ENCODE measurements at regions of chr17 and their contacts with region 1.

Region 1: GRCh38 chr17:66460558-66460957 is 158.1 kb downstream of the PRKCA start:
- DNase-seq: no peak
- ATAC-seq: no peak
- H3K4me3 ChIP-seq: no peak overlapping the region
- H3K27ac ChIP-seq: peak overlapping the region; percentile 81
- H3K4me1 ChIP-seq: peaks cover 39% of the 10 kb centered on the region
- H3K27me3 ChIP-seq: no peaks in the 10 kb centered on the region
- CTCF ChIP-seq: no peak

Region 2: GRCh38 chr17:65826285-65826976 is 634.1 kb before region 1 on chr17:
- CTCF ChIA-PET with region 1: no interaction called
- POLR2A ChIA-PET with region 1: no interaction called
- in situ Hi-C with region 1: no loop called
- intact Hi-C with region 1: no loop called
- DNase-seq: no peak
- ATAC-seq: no peak
- H3K4me3 ChIP-seq: no peak overlapping the region
- H3K27ac ChIP-seq: no peak overlapping the region
- H3K4me1 ChIP-seq: no peaks in the 10 kb centered on the region
- H3K27me3 ChIP-seq: no peaks in the 10 kb centered on the region
- CTCF ChIP-seq: no peak

Region 3: DNA sequence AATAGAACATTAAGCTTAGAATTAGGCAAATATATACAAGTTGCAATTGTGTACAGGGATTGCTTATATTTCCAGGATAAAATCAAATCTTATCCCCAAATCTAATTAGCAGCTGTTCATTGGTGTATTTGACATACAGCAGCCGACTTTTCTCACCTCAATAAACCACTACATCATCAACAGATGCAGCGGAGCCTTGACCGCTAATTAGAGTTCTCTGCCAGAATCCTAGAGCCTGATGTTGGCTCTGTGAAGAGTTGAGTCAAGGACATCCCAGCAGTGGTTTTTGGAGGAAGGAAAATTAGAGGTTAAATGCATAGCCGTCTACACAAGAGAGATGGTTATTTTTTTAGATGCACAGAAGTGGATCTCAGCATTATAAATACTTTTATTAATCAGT is 152.4 kb after region 1 on chr17:
- CTCF ChIA-PET with region 1: no interaction called
- POLR2A ChIA-PET with region 1: interaction called, 11 read pairs
- in situ Hi-C with region 1: no loop called
- intact Hi-C with region 1: no loop called
- DNase-seq: no peak
- ATAC-seq: no peak
- H3K4me3 ChIP-seq: no peak overlapping the region
- H3K27ac ChIP-seq: no peak overlapping the region
- H3K4me1 ChIP-seq: no peaks in the 10 kb centered on the region
- H3K27me3 ChIP-seq: no peaks in the 10 kb centered on the region
- CTCF ChIP-seq: no peak